HEK293 (cell line): ENCODE measurements at regions of chr6 and their contacts with region 1.

Region 1: GRCh38 chr6:593139-593906 is 63.6 kb downstream of the HUS1B start:
- H3K4me3 ChIP-seq: no peak overlapping the region
- H3K27ac ChIP-seq: no peak overlapping the region
- H3K4me1 ChIP-seq: no peaks in the 10 kb centered on the region; the same call in 1 of the 2 replicates
- CTCF ChIP-seq: no peak

Region 2: DNA sequence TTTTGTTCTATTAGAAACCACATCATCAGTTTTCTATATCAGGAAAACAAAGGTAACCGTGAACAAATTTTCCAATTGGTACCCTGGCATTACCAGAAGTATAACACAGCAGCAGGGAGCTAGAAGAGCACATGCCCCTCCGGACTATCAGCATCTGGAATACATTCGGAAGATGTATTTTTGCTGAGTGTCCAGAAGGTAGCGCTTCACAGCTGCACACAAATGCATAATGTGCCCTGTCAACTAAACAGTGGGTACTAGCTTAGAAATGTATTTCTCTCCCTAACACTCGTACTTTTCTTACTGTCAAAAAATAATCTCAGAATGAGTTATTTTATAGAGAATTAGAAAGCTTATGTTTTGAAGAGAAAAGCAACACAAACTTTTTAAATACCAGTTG is 14.0 kb before region 1 on chr6:
- CTCF ChIA-PET with region 1: interaction called, 49 read pairs
- POLR2A ChIA-PET with region 1: no interaction called
- H3K4me3 ChIP-seq: no peak overlapping the region
- H3K27ac ChIP-seq: no peak overlapping the region
- H3K4me1 ChIP-seq: peaks cover 10% of the 10 kb centered on the region
- CTCF ChIP-seq: no peak

Region 3: GRCh38 chr6:683742-684440 is 90.6 kb after region 1 on chr6:
- CTCF ChIA-PET with region 1: interaction called, 27 read pairs
- POLR2A ChIA-PET with region 1: no interaction called
- H3K4me3 ChIP-seq: peak overlapping the region; percentile 20
- H3K27ac ChIP-seq: peak overlapping the region; percentile 91
- H3K4me1 ChIP-seq: peaks cover 50% of the 10 kb centered on the region
- CTCF ChIP-seq: no peak; the same call in 1 of the 2 replicates

Region 4: DNA sequence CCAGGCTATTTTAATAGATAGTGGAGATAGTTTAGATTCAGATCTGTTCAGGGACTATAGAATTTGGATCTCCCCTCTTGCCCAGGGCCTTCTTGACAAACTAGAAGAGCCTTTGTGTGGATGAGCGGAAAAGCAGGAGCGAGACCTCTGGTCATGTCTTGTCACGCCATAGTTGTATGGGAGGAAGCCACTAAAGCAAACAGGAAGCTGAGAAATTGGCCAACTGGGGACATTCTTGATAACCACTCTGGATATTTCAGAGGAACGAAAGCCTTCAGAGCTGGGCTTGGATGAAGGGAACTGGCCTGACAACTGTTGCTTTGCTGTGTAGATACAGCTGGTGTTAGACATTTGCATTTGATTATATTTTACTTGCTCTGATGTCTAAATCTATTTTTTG is 153.7 kb after region 1 on chr6:
- CTCF ChIA-PET with region 1: no interaction called
- POLR2A ChIA-PET with region 1: no interaction called
- H3K4me3 ChIP-seq: no peak overlapping the region
- H3K27ac ChIP-seq: no peak overlapping the region
- H3K4me1 ChIP-seq: no peaks in the 10 kb centered on the region
- CTCF ChIP-seq: no peak

Region 5: DNA sequence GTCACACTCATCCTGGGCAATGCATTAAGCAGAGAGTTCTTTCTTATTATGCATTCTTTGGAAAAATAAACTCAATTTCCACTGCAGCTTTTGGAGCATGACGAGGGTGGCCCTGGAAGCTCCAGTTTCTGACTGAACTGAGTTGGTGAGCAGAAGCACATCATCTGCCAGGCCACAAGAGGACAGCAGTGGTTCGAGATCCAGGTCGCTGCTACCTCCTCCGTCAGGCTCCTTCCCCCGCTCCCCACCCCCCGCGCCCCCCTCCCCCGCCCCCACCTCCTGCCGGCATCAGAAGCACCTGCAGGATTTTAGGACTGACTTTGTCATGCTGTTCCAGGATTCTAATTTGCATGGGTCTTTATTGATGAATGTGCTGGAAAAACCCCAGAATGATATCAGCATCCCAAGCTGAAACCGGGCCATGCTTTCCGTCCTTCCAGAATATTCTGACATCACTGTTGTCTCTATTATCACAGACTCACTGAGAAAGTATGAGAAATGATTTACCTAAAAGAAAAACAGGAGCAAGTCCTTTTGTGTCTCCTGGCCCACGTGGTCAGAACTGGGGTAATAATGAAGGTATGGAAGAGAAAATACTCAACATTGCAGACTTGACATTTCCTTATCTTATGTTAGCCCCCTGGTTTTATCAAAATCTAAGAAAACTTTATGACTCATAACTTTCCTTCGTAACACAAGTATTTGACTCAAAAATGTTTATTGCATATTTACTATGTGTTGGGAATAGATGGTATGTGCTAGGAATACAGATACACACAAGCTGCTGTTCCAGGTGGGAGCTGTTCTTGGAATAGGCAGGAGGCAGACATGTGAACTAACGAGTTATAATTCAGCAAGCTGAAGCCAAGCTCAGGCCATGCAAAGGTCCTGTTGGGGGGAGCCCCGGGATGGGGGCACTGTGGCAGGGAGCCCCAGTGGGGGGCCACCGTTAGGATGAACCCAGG is 319.8 kb after region 1 on chr6:
- CTCF ChIA-PET with region 1: interaction called, 22 read pairs
- POLR2A ChIA-PET with region 1: no interaction called
- H3K4me3 ChIP-seq: no peak overlapping the region
- H3K27ac ChIP-seq: no peak overlapping the region
- H3K4me1 ChIP-seq: 0 out of 2 replicates have a peak, but pooled peaks cover 3% of the 10 kb centered on the region
- CTCF ChIP-seq: peak; percentile 26; the same call in 1 of the 2 replicates